HepG2 (cell line): ENCODE measurements at regions of chr10 and their contacts with region 1.

Region 1: DNA sequence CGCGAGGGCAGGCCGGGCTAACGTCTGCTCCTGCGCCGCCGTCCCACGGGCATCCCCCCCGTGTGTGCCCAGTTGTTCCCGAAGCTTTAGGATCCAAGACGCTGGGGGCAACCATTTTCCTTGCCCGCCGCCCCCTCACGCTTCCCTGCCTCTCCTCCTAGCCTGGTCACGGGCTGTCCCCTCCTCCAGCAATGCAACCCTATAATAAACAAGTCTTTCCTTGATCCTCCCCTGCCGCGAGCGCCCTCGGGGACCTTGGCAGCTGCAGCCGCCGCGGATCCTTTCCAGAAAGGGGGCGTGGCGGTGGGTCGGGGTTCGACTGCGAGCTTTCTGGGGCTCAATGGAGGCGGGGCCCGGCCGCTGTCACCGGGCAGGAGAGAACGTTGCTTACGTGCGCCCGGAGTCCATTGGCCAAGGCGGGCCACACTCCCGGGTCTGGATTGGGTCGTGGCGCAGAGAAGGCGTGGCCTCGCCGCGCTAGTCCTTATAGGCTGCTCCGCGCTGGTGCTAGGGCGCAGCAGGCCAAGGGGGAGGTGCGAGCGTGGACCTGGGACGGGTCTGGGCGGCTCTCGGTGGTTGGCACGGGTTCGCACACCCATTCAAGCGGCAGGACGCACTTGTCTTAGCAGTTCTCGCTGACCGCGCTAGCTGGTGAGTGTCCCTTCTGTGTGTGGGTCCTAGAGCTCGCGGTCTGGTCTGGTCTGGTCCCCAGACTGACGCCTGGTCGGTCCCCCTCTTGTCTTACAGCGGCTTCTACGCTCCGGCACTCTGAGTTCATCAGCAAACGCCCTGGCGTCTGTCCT is at the start of gene DDIT4:
- DNase-seq: peak; percentile 93
- ATAC-seq: peak; percentile 87
- H3K4me3 ChIP-seq: peak within 1 kb of the TSS; percentile 81 to 99 (median 98)
- H3K27ac ChIP-seq: peak within 1 kb of the TSS; percentile 81
- H3K4me1 ChIP-seq: peaks cover 61% of the 10 kb centered on the region
- H3K27me3 ChIP-seq: no peaks in the 10 kb centered on the region; a peak in 1 of 5 replicates
- CTCF ChIP-seq: no peak; the same call in 1 of the 2 replicates
- EP300 ChIP-seq: peak in 1 of 2 experiments; percentile 65; a peak in 2 of 4 replicates
- POLR2A ChIP-seq: peak in 1 of 2 experiments; percentile 100; a peak in 2 of 4 replicates
- RAD21 ChIP-seq: peak; percentile 75
- total RNA-seq, gene DDIT4: 35.2 and 35.6 TPM in 2 replicates

Region 2: DNA sequence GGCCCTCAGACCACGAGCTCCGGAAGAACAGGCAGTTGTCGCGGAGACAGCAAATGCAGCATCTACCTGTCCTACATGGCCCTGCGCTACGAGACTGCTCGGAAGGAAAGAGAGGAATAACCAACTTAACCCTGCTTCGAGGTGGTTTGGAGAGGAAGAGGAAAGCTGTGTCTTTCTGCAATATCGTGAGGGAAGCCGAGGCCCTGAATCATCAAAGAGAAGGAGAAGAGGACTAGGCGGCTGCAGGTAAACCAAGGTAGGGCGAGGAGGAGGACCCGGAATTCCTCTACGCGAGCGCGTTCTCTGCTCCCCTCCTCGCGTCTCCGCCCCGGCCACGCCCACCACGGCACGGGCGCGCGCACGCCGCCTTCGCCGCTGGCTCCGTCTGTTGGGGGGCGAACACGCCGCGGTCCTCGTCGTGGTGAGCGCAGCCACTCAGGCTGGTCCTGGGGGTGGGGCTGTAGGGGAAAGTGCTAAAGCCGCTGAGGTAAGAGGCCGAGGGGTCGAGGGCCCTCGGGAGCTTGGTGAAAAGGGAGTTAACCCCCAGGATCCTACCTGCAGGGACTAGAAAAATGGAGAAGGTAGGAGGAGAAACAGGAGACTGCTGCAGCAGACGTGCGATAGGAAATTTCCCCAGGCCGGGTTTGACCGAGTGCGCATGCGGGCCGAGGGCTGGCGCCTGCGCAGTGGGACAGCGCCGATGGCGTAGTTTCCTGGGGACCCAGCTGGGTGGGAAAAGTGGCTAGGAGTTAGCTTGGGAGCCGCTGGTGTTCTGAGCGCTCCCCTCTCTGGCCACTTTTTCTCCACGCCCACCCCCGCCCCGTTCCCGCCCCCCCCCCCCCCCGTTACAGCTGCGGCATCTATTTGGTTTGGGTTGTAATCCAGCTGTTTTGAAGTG is 57.7 kb before region 1 on chr10 and contains the starts of genes ANAPC16 and ASCC1:
- CTCF ChIA-PET with region 1: no interaction called
- POLR2A ChIA-PET with region 1: interaction called, 47 read pairs
- in situ Hi-C with region 1: no loop called
- intact Hi-C with region 1: no loop called
- DNase-seq: peak; percentile 85
- ATAC-seq: peak; percentile 93
- H3K4me3 ChIP-seq: peak within 1 kb of the TSS; percentile 82 to 98 (median 83)
- H3K27ac ChIP-seq: peak within 1 kb of the TSS; percentile 99
- H3K4me1 ChIP-seq: peaks cover 54% of the 10 kb centered on the region
- H3K27me3 ChIP-seq: no peaks in the 10 kb centered on the region
- CTCF ChIP-seq: peak; percentile 27; the same call in 1 of the 2 replicates
- EP300 ChIP-seq: peak; percentile 31 to 61; a peak in 2 of 4 replicates
- POLR2A ChIP-seq: peak; percentile 94 to 96
- RAD21 ChIP-seq: peak; percentile 44; the same call in 1 of the 2 replicates
- total RNA-seq, gene ANAPC16: 74.8 and 95.6 TPM in 2 replicates
- total RNA-seq, gene ASCC1: 30.1 and 51.0 TPM in 2 replicates

Region 3: DNA sequence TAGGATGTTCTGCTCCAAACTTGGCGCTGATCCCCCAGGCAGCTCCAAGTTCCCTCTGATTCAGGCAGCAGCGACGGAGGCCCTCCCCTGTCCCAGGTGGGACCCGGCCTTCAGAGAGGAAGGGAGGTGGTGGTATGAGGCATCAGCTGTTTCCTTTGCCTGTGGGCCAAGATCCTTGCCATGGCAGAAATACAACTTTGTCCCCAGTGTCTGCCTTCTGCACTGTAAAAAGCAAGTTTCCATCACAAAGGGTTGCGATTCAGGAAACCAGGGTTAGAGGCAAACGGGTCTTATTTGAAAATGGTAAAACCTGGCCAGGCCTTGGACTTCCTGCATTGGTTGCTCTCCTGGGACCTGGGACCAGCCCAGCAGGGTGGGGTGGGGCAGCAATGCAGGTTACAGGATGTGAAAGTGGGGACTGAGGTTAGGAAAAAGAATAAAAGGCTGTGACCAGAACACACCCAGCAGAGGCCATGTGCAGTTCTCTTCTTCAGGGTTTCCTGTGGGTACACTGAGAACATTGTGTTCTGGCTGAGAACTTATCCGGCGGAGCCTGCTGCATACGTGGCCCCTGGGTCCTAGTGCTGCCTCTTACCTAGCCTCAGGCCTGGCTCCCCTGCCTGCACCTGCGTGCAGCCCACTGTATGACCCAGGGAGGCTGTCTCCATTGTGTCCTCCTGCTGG is 25.0 kb before region 1 on chr10:
- CTCF ChIA-PET with region 1: no interaction called
- POLR2A ChIA-PET with region 1: interaction called, 45 read pairs
- in situ Hi-C with region 1: no loop called
- intact Hi-C with region 1: loop called (anchors 2 kb)
- DNase-seq: peak; percentile 68
- ATAC-seq: peak; percentile 84
- H3K4me3 ChIP-seq: peak overlapping the region; percentile 56 to 75 (median 65)
- H3K27ac ChIP-seq: peak overlapping the region; percentile 81
- H3K4me1 ChIP-seq: peaks cover 94% of the 10 kb centered on the region
- H3K27me3 ChIP-seq: no peaks in the 10 kb centered on the region
- CTCF ChIP-seq: 0 out of 2 replicates have a peak, but pooled peaks have one; percentile 8
- EP300 ChIP-seq: no peak
- POLR2A ChIP-seq: peak; percentile 88 to 95
- RAD21 ChIP-seq: 0 out of 2 replicates have a peak, but pooled peaks have one; percentile 6

Region 4: DNA sequence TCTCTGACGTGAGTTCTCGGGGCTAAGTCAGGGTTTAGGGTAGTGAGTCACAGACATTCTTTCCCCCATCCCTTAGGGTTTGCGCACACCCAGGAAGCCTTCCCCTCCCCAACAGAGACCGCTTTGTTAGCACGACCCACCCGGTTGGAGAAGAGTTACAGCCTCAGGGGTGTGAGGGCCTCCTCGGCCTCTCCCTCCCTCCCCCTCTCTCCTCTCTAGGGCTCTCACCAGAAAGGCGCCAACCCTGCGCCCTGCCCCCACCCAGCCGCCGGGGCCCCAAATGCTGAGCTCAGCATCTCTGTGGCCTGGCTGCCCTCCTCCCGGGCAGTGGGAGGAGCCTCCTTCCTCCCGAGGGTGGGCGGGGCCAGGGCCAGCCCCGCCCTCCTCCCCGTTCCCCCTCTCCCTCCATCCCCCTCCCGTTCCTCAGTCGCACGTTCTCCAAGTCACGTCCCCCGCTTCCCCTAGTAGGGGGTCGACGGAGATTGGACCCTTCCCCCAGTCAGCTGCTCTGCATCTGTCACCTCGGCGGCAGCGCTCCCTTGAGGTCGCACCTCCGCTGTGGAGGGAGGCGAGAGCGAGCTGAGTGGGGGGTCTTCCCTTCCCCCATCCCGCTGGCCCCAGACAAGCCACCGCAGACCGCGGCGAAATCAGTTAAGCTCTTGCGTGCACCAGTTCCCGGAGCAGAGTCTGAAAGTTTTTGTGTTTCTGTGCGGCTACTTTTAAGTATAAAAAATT is 12.9 kb before region 1 on chr10:
- CTCF ChIA-PET with region 1: no interaction called
- POLR2A ChIA-PET with region 1: interaction called, 155 read pairs
- in situ Hi-C with region 1: no loop called
- intact Hi-C with region 1: no loop called
- DNase-seq: peak; percentile 88
- ATAC-seq: peak; percentile 84
- H3K4me3 ChIP-seq: peak overlapping the region; percentile 50 to 74 (median 61)
- H3K27ac ChIP-seq: peak overlapping the region; percentile 91
- H3K4me1 ChIP-seq: peaks cover 84% of the 10 kb centered on the region
- H3K27me3 ChIP-seq: no peaks in the 10 kb centered on the region
- CTCF ChIP-seq: peak; percentile 85
- EP300 ChIP-seq: peak in 1 of 2 experiments; percentile 56; a peak in 1 of 4 replicates
- POLR2A ChIP-seq: peak; percentile 11 to 55; a peak in 2 of 4 replicates
- RAD21 ChIP-seq: no peak

Region 5: GRCh38 chr10:72291019-72291532 is 17.5 kb after region 1 on chr10:
- CTCF ChIA-PET with region 1: no interaction called
- POLR2A ChIA-PET with region 1: interaction called, 20 read pairs
- in situ Hi-C with region 1: no loop called
- intact Hi-C with region 1: no loop called
- DNase-seq: no peak
- ATAC-seq: no peak
- H3K4me3 ChIP-seq: no peak overlapping the region
- H3K27ac ChIP-seq: no peak overlapping the region
- H3K4me1 ChIP-seq: peaks cover 27% of the 10 kb centered on the region
- H3K27me3 ChIP-seq: peaks cover 0 to 1% of the 10 kb centered on the region in 2 experiments; a peak in 1 of 5 replicates
- CTCF ChIP-seq: no peak
- EP300 ChIP-seq: no peak
- POLR2A ChIP-seq: no peak
- RAD21 ChIP-seq: no peak

Region 6: GRCh38 chr10:72308320-72308987 is 34.8 kb after region 1 on chr10:
- CTCF ChIA-PET with region 1: no interaction called
- POLR2A ChIA-PET with region 1: interaction called, 52 read pairs
- in situ Hi-C with region 1: no loop called
- intact Hi-C with region 1: no loop called
- DNase-seq: peak; percentile 64
- ATAC-seq: peak; percentile 69
- H3K4me3 ChIP-seq: peak overlapping the region in 2 of 3 experiments; percentile 20 to 55; a peak in 3 of 6 replicates
- H3K27ac ChIP-seq: peak overlapping the region; percentile 26
- H3K4me1 ChIP-seq: peaks cover 59% of the 10 kb centered on the region
- H3K27me3 ChIP-seq: no peaks in the 10 kb centered on the region
- CTCF ChIP-seq: no peak
- EP300 ChIP-seq: no peak
- POLR2A ChIP-seq: no peak
- RAD21 ChIP-seq: no peak

Region 7: DNA sequence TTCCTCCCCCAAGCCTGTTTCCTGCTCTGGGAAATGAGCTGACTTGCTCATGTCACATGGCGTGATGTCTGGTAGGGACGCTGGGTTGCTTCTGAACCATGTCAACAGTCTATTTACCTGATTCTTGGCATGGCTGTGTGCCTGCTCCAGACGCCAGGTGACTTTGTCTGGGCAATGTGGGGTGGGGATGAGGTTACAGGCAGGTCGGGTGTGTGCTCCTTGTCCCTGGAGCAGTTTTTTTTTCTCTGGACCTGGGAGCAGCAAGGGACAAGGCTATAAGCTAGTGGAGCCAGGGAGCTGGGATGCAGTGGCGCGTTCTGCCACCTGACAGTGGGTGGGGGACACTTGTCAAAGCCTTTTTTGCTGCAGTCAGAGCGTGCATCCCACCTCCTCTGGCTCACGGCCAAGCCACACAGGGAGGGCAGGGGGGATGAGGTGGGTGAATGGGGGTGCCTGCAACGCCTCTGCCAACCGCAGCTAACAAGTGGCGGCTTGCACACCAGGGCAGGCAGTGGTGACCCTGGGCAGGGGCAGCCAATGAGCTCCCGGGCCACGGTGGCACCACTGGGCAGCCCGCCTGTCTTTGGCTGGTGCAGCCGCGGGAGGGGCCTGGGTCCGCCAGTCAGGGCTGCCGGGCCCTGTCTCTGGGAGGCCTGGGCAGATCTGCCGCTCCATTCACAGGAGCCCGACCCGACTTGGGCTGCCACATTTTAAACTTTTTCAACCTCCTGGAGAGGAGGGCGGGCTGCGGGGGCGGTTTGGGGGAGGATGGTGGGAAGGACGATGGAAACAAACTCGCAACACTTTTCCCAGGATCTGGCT is 58.2 kb after region 1 on chr10:
- CTCF ChIA-PET with region 1: interaction called, 9 read pairs
- POLR2A ChIA-PET with region 1: interaction called, 80 read pairs
- in situ Hi-C with region 1: loop called (anchors 5 kb)
- intact Hi-C with region 1: loop called (anchors 2 kb)
- DNase-seq: peak; percentile 91
- ATAC-seq: peak; percentile 82
- H3K4me3 ChIP-seq: peak overlapping the region; percentile 13 to 65 (median 22); a peak in 4 of 6 replicates
- H3K27ac ChIP-seq: peak overlapping the region; percentile 91
- H3K4me1 ChIP-seq: peaks cover 95% of the 10 kb centered on the region
- H3K27me3 ChIP-seq: no peaks in the 10 kb centered on the region
- CTCF ChIP-seq: peak; percentile 54
- EP300 ChIP-seq: peak in 1 of 2 experiments; percentile 44; a peak in 1 of 4 replicates
- POLR2A ChIP-seq: no peak
- RAD21 ChIP-seq: no peak